ENCODE measurements at regions of chr5 and their contacts with region 1.

Region 1: GRCh38 chr5:10364186-10364683 is 10.7 kb downstream of the MARCHF6 start:
- DNase-seq: peak; percentile 60 to 76 (median 68)
- H3K4me3 ChIP-seq: no peak overlapping the region
- H3K27ac ChIP-seq: no peak overlapping the region
- H3K4me1 ChIP-seq: peaks cover 3 to 25% (median 12%) of the 10 kb centered on the region in 4 experiments
- H3K27me3 ChIP-seq: no peaks in the 10 kb centered on the region

Region 2: GRCh38 chr5:10353241-10354047 is 10.8 kb before region 1 on chr5 and contains the start of gene MARCHF6:
- CTCF ChIA-PET with region 1: interaction called, 14 read pairs
- POLR2A ChIA-PET with region 1: interaction called, 6 read pairs
- DNase-seq: peak; percentile 93 to 96 (median 95)
- H3K4me3 ChIP-seq: peak within 1 kb of the TSS; percentile 84 to 100 (median 96)
- H3K27ac ChIP-seq: peak within 1 kb of the TSS; percentile 91 to 96
- H3K4me1 ChIP-seq: peaks cover 11 to 51% (median 36%) of the 10 kb centered on the region in 4 experiments
- H3K27me3 ChIP-seq: no peaks in the 10 kb centered on the region

Region 3: GRCh38 chr5:10374046-10375022 is 10.1 kb after region 1 on chr5:
- CTCF ChIA-PET with region 1: interaction called, 10 read pairs
- POLR2A ChIA-PET with region 1: no interaction called
- DNase-seq: no peak
- H3K4me3 ChIP-seq: no peak overlapping the region
- H3K27ac ChIP-seq: no peak overlapping the region
- H3K4me1 ChIP-seq: peaks cover 0 to 12% (median 7%) of the 10 kb centered on the region in 4 experiments
- H3K27me3 ChIP-seq: no peaks in the 10 kb centered on the region

Region 4: GRCh38 chr5:10622810-10623209 is 258.6 kb after region 1 on chr5:
- CTCF ChIA-PET with region 1: no interaction called
- POLR2A ChIA-PET with region 1: no interaction called
- DNase-seq: no peak
- H3K4me3 ChIP-seq: no peak overlapping the region
- H3K27ac ChIP-seq: no peak overlapping the region
- H3K4me1 ChIP-seq: peaks cover 7 to 33% (median 20%) of the 10 kb centered on the region in 4 experiments
- H3K27me3 ChIP-seq: no peaks in the 10 kb centered on the region

Measured in common myeloid progenitor, CD34-positive (primary cell).